Endothelial cell of umbilical vein (primary cell): ENCODE measurements at regions of chrX and their contacts with region 1.

Region 1: GRCh38 chrX:12946838-12947544 is 27.9 kb upstream of the TMSB4X start:
- DNase-seq: peak; percentile 90
- H3K4me3 ChIP-seq: no peak overlapping the region
- H3K27ac ChIP-seq: peak overlapping the region; percentile 64
- H3K4me1 ChIP-seq: peaks cover 27% of the 10 kb centered on the region
- H3K27me3 ChIP-seq: no peaks in the 10 kb centered on the region
- CTCF ChIP-seq: peak; percentile 85 to 87
- POLR2A ChIP-seq: no peak

Region 2: GRCh38 chrX:12421918-12422317 is 525.1 kb before region 1 on chrX:
- CTCF ChIA-PET with region 1: no interaction called
- POLR2A ChIA-PET with region 1: no interaction called
- dilution Hi-C with region 1: no loop called
- intact Hi-C with region 1: no loop called
- DNase-seq: peak; percentile 9
- H3K4me3 ChIP-seq: no peak overlapping the region
- H3K27ac ChIP-seq: peak overlapping the region; percentile 18
- H3K4me1 ChIP-seq: no peaks in the 10 kb centered on the region
- H3K27me3 ChIP-seq: no peaks in the 10 kb centered on the region
- CTCF ChIP-seq: no peak
- POLR2A ChIP-seq: no peak

Region 3: DNA sequence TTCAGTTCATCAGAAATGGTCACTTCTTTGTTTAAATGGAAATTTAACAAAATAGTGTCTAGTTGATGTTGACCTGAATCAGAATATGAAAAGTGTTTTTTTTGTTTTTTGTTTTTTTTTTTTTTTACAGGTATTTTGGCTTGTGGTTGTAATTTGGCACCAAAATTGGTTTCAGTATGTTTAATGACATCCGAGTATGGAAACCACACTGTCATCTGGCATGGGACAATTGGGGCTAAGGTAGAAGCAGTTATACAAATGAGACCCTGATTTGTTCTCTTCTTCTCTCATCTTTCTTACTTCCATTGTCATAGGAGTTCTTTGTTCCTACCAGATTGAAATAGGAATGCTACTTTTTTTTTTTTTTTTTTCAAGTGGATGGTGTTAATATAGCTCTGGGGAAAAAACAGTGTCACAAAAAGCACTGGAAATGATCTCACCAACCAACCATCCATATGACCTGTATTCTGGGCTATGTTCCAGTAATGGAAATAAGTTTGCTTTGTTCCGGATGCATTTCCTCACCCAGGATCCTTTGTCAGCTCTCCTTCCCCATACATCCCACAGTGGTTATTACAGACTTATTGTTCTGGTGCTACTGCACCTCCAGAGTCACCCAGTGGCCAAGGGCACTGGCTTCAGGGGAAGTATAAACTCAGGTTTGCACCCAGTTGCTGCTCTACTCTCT is 277.0 kb after region 1 on chrX:
- CTCF ChIA-PET with region 1: interaction called, 12 read pairs
- POLR2A ChIA-PET with region 1: no interaction called
- dilution Hi-C with region 1: no loop called
- intact Hi-C with region 1: loop called (anchors 1 kb)
- DNase-seq: peak; percentile 91
- H3K4me3 ChIP-seq: no peak overlapping the region
- H3K27ac ChIP-seq: peak overlapping the region; percentile 87
- H3K4me1 ChIP-seq: peaks cover 16% of the 10 kb centered on the region
- H3K27me3 ChIP-seq: no peaks in the 10 kb centered on the region
- CTCF ChIP-seq: peak in 1 of 2 donors; percentile 14
- POLR2A ChIP-seq: no peak

Region 4: GRCh38 chrX:13646154-13646549 is 699.2 kb after region 1 on chrX:
- CTCF ChIA-PET with region 1: interaction called, 22 read pairs
- POLR2A ChIA-PET with region 1: no interaction called
- dilution Hi-C with region 1: no loop called
- intact Hi-C with region 1: loop called (anchors 1 kb)
- DNase-seq: peak; percentile 42
- H3K4me3 ChIP-seq: no peak overlapping the region
- H3K27ac ChIP-seq: no peak overlapping the region
- H3K4me1 ChIP-seq: peaks cover 3% of the 10 kb centered on the region
- H3K27me3 ChIP-seq: no peaks in the 10 kb centered on the region
- CTCF ChIP-seq: peak; percentile 46 to 59
- POLR2A ChIP-seq: no peak

Region 5: GRCh38 chrX:13653022-13653693 is 706.2 kb after region 1 on chrX and contains the start of gene TCEANC:
- CTCF ChIA-PET with region 1: interaction called, 3 read pairs
- POLR2A ChIA-PET with region 1: no interaction called
- dilution Hi-C with region 1: no loop called
- intact Hi-C with region 1: loop called (anchors 2 kb)
- DNase-seq: peak; percentile 95
- H3K4me3 ChIP-seq: peak within 1 kb of the TSS; percentile 33 to 89 (median 87)
- H3K27ac ChIP-seq: peak within 1 kb of the TSS; percentile 63
- H3K4me1 ChIP-seq: peaks cover 6% of the 10 kb centered on the region
- H3K27me3 ChIP-seq: no peaks in the 10 kb centered on the region
- CTCF ChIP-seq: no peak
- POLR2A ChIP-seq: peak; percentile 59
- total RNA-seq, gene TCEANC: 0.75 and 1.8 TPM in 2 replicates

Region 6: GRCh38 chrX:13734278-13735172 is 787.5 kb after region 1 on chrX and contains the starts of genes OFD1 and TRAPPC2:
- CTCF ChIA-PET with region 1: interaction called, 3 read pairs
- POLR2A ChIA-PET with region 1: no interaction called
- dilution Hi-C with region 1: no loop called
- intact Hi-C with region 1: loop called (anchors 5 kb)
- DNase-seq: peak; percentile 91
- H3K4me3 ChIP-seq: peak within 1 kb of the TSS; percentile 73 to 88 (median 83)
- H3K27ac ChIP-seq: peak within 1 kb of the TSS; percentile 78
- H3K4me1 ChIP-seq: peaks cover 5% of the 10 kb centered on the region
- H3K27me3 ChIP-seq: no peaks in the 10 kb centered on the region
- CTCF ChIP-seq: no peak
- POLR2A ChIP-seq: peak; percentile 71
- total RNA-seq, gene OFD1: 12.0 and 14.4 TPM in 2 replicates
- total RNA-seq, gene TRAPPC2: 13.0 and 14.1 TPM in 2 replicates

Region 7: DNA sequence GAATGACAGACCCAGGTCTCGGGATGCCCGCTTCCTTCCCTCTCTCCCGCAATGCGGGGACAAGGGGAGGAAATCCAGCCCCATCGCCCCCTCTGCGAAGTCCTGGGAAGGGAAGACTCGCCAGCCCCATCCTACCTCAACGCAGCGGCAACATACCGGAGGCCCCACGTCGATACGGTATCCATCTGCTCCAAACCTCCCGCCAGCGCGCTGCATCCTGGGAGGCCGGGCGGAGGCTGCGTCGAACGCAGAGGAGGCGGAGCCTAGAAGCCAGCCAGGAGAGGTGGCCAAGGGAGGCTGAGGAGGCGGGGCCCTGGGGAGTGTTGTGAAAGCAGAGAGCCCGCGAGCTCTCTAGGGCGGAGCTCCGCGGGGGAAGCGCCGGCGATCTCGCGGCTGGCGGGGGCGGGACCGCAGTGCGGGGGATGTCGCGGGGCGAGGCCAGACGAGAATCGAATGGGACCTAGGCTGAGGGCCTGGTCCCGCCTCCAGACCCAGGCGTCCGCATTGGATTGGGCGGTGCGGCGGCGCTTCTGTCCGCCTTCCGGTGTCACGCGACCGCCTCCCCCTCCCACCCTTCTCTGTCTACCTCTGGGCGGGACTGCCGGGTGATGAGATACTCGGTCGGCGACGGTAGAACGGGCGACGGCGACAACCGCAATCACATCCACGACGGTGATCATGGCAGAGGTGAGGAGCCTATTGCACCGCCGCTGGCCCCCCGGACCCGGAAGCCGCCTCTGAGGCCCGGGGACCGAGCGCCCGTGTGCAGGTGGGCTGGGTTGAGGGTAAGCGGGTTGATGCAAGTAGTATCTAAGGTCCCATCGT is 1926.1 kb after region 1 on chrX and contains the starts of genes FANCB and MOSPD2:
- CTCF ChIA-PET with region 1: no interaction called
- POLR2A ChIA-PET with region 1: no interaction called
- dilution Hi-C with region 1: no loop called
- intact Hi-C with region 1: loop called (anchors 10 kb)
- DNase-seq: peak; percentile 95
- H3K4me3 ChIP-seq: peak within 1 kb of the TSS; percentile 70 to 94 (median 92)
- H3K27ac ChIP-seq: peak within 1 kb of the TSS; percentile 69
- H3K4me1 ChIP-seq: peaks cover 9% of the 10 kb centered on the region
- H3K27me3 ChIP-seq: no peaks in the 10 kb centered on the region
- CTCF ChIP-seq: no peak
- POLR2A ChIP-seq: peak; percentile 26
- total RNA-seq, gene FANCB: 6.6 and 7.9 TPM in 2 replicates
- total RNA-seq, gene MOSPD2: 13.3 and 14.9 TPM in 2 replicates